ENCODE measurements at regions of chr20 and their contacts with region 1.

Region 1: GRCh38 chr20:32521780-32522525 is 63.2 kb downstream of the NOL4L start:
- DNase-seq: no peak
- H3K4me3 ChIP-seq: no peak overlapping the region
- H3K27me3 ChIP-seq: no peaks in the 10 kb centered on the region
- CTCF ChIP-seq: peak; percentile 92

Region 2: DNA sequence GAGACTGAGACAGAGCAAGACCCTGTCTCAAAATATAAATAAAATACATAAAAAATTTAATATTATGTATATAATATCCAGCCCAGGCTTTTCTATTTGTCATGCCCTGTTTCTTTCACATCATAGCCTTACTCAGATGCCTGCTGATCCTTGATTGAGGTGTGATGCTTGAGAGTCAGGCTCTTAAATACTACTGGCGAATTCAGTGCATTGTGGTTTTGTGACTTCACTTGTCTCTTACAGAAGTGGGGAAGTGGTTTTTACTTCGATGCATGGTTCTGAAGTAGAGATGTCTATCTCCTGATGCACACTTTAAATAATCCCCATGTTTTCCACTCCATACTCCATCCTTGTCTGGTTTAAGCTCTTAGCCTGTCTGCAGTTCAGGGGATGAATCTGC is 134.7 kb before region 1 on chr20:
- CTCF ChIA-PET with region 1: no interaction called
- POLR2A ChIA-PET with region 1: no interaction called
- DNase-seq: no peak
- H3K4me3 ChIP-seq: no peak overlapping the region
- H3K27me3 ChIP-seq: no peaks in the 10 kb centered on the region
- CTCF ChIP-seq: no peak

Region 3: DNA sequence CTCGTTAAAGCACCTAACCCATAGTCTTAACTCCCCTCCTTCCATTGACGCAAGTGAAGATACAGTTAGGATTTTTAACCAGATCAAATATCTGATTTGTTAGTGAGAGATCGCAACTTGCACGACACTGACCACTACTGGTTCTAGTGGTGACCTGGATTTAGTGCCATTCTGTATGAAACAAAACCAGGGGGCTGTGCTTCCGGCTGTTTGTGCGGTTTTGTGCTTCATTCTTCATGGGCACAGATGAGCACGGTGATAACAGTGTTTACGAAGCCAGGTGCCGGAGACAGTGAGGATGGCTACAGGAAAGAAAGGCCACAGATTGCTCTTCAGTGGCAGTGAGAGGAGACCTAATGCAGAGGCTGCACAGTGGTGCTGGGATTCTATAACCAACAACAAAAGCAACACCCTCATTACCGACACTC is 12.3 kb before region 1 on chr20:
- CTCF ChIA-PET with region 1: interaction called, 16 read pairs
- POLR2A ChIA-PET with region 1: no interaction called
- DNase-seq: peak; percentile 39
- H3K4me3 ChIP-seq: no peak overlapping the region
- H3K27me3 ChIP-seq: no peaks in the 10 kb centered on the region
- CTCF ChIP-seq: peak; percentile 37

Region 4: DNA sequence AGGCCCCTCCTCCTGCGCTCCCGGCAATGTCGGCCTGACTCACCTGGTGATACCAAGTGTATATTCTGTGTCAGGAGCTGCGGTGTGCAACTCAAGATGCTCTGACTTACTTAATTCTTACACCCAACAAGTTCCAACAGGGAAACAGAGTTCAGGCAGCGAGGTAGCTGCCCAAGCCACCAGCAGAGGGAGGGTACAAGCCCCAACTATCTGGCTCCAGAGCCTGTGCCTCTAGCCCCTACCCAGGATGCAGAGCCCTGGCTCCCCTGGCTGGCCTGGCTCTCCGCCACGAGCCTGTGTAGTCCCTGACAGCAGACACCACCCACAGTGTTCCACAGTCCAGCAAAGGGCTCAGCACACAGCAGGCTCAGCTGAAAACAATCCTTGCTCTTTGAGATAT is 116.9 kb after region 1 on chr20:
- CTCF ChIA-PET with region 1: interaction called, 17 read pairs
- POLR2A ChIA-PET with region 1: no interaction called
- DNase-seq: no peak
- H3K4me3 ChIP-seq: no peak overlapping the region
- H3K27me3 ChIP-seq: peaks cover 8% of the 10 kb centered on the region
- CTCF ChIP-seq: no peak

Region 5: GRCh38 chr20:32652739-32653526 is 131.0 kb after region 1 on chr20:
- CTCF ChIA-PET with region 1: interaction called, 262 read pairs
- POLR2A ChIA-PET with region 1: no interaction called
- DNase-seq: peak; percentile 5
- H3K4me3 ChIP-seq: no peak overlapping the region
- H3K27me3 ChIP-seq: no peaks in the 10 kb centered on the region; the same call in 1 of the 2 replicates
- CTCF ChIP-seq: peak; percentile 94

Region 6: GRCh38 chr20:32674362-32674789 is 152.4 kb after region 1 on chr20:
- CTCF ChIA-PET with region 1: interaction called, 15 read pairs
- POLR2A ChIA-PET with region 1: no interaction called
- DNase-seq: no peak
- H3K4me3 ChIP-seq: no peak overlapping the region
- H3K27me3 ChIP-seq: no peaks in the 10 kb centered on the region
- CTCF ChIP-seq: peak; percentile 88